ENCODE measurements at regions of chrX and their contacts with region 1.

Region 1: GRCh38 chrX:153470435-153471363 is at the start of gene HAUS7:
- DNase-seq: peak; percentile 96
- total RNA-seq, gene HAUS7: 23.5 to 30.1 TPM

Region 2: GRCh38 chrX:153414856-153415510 is 55.7 kb before region 1 on chrX:
- intact Hi-C with region 1: no loop called
- DNase-seq: peak; percentile 66

Region 3: DNA sequence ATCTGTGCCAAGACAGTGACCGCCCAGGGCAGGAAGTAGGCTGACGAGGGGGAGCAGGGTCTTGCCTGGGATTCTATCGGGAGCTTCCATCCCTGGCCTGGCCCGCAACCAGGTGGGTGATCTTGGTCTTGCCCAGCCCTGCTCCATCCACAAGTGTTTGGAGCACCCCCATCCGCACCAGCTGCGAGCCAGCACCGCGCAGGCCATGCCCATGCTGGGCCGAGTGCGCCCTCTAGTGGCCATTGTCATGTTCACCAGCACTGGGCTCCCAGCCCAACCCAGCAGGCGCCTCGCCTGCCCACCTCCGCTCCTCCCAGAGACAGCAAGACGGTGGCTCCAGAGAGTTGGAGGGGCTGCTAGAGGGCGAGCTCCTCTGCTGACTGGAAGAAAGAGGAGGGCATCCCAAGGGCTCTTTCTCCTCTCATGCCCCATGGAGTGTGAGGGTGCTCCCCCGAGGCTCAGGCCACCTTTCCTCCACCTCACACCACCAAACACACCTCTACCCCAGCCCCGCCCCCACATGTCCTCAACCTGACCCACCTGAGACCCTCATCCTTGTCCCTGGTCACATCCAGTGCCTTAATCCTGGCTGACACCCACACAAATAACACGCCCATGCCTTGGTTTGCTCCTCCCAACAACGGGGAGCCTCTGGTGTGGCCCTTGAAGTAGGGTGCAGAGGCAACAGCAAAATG is 36.9 kb after region 1 on chrX:
- intact Hi-C with region 1: loop called in 1 of 2 experiments (anchors 5 kb)
- DNase-seq: peak; percentile 95

Region 4: DNA sequence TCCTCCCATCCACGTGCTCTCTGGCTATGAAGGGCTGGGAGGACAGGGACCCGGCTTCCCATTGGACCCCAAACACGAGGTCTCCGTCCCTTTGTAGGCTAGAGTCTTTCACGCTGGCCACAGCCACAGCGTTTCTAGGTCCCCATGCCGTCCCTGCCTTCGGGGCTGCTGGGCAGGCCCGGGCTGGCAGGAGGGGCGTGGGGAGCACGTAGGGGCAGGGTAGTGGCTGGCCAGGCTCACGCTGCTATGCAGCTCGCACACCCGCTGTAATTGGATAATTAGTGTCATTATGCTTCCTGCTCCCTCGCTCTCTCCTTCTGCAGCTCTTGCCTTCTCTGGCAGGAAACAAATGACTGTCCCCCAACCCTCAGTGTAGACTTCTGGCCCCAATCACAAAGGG is 56.5 kb after region 1 on chrX:
- intact Hi-C with region 1: no loop called
- DNase-seq: no peak

Region 5: GRCh38 chrX:153539171-153539978 is 68.7 kb after region 1 on chrX:
- intact Hi-C with region 1: no loop called
- DNase-seq: peak; percentile 90